A549 (cell line): ENCODE measurements at regions of chr17 and their contacts with region 1.

Region 1: DNA sequence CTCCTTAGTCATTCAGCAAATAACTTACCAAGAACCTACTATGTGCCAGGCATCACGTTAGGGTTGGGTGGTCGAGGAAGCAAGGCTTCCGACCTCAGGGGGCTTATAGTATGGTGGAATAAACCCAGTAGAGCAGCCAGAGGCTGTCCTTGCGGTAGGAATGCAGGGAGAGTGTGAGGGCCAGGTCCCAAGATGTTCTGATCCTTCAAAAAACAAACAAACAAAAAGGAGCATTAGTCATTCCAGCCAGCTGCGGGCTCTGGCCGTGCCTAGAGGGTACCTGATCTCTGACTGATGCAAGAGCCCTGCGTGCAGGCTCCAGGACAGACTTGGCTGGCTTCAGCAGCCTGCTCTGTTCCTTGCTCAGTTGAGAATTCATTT is 18.2 kb downstream of the CYB5D2 start:
- DNase-seq: peak; percentile 90 to 98
- ATAC-seq: peak; percentile 89 to 94
- H3K4me3 ChIP-seq: no peak overlapping the region
- H3K27ac ChIP-seq: peak overlapping the region; percentile 90
- H3K4me1 ChIP-seq: peaks cover 39% of the 10 kb centered on the region
- CTCF ChIP-seq: no peak
- EP300 ChIP-seq: no peak
- POLR2A ChIP-seq: no peak
- RAD21 ChIP-seq: no peak

Region 2: GRCh38 chr17:4130715-4131114 is 30.5 kb before region 1 on chr17:
- CTCF ChIA-PET with region 1: no interaction called
- POLR2A ChIA-PET with region 1: no interaction called
- DNase-seq: no peak
- ATAC-seq: no peak
- H3K4me3 ChIP-seq: no peak overlapping the region
- H3K27ac ChIP-seq: no peak overlapping the region
- H3K4me1 ChIP-seq: no peaks in the 10 kb centered on the region
- CTCF ChIP-seq: no peak
- EP300 ChIP-seq: no peak
- POLR2A ChIP-seq: no peak
- RAD21 ChIP-seq: no peak

Region 3: GRCh38 chr17:4175921-4176807 is 15.0 kb after region 1 on chr17:
- CTCF ChIA-PET with region 1: interaction called, 45 read pairs
- POLR2A ChIA-PET with region 1: no interaction called
- DNase-seq: no peak
- ATAC-seq: no peak
- H3K4me3 ChIP-seq: no peak overlapping the region
- H3K27ac ChIP-seq: no peak overlapping the region
- H3K4me1 ChIP-seq: no peaks in the 10 kb centered on the region
- CTCF ChIP-seq: no peak
- EP300 ChIP-seq: no peak
- POLR2A ChIP-seq: no peak
- RAD21 ChIP-seq: no peak